Naive thymus-derived CD4-positive, alpha-beta T cell (primary cell): ENCODE measurements at regions of chr22 and their contacts with region 1.

Region 1: GRCh38 chr22:22802339-22802970 is 85.2 kb upstream of the IGLL5 start:
- DNase-seq: peak in 5 of 9 donors; percentile 26 to 53 (median 34)
- ATAC-seq: peak; percentile 79
- H3K4me3 ChIP-seq: no peak overlapping the region
- H3K4me3 Mint-ChIP-seq: no peak overlapping the region
- H3K27ac ChIP-seq: no peak overlapping the region
- H3K27ac Mint-ChIP-seq: peak overlapping the region in 1 of 9 donors; percentile 10
- H3K4me1 ChIP-seq: peaks cover 0 to 41% of the 10 kb centered on the region in 2 donors
- H3K4me1 Mint-ChIP-seq: peaks cover 0 to 29% (median 16%) of the 10 kb centered on the region in 7 donors
- H3K27me3 ChIP-seq: no peaks in the 10 kb centered on the region
- H3K27me3 Mint-ChIP-seq: peaks cover 0 to 51% (median 0%) of the 10 kb centered on the region in 5 donors

Region 2: DNA sequence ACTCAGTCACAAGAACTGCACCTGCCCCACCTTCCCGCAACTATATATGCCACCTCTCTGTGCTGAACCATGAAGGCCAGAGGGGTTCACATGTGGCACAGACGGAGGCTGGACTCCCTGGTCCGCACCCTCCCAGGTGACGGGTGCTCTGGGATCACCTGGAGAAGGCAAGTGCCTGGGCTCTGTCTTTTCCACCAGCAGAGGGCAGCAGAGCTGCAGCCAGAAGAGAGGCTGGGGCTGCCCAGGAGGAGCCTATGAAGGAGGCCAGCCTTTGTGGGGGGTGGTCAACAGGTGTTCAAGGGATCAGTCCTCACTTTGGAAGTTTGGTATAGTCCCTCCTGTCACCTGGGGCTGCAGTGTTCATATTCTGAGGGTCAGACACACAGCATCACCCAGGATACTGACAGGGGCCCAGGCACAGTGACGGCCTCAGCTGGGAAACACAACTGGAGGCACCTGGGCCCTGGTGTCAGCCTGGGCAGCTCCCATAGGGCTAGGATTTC is 46.0 kb after region 1 on chr22:
- CTCF ChIA-PET with region 1: interaction called, 7 read pairs
- POLR2A ChIA-PET with region 1: no interaction called
- intact Hi-C with region 1: loop called in 1 of 2 experiments (anchors 2 kb)
- DNase-seq: peak; percentile 35 to 75 (median 52)
- ATAC-seq: peak; percentile 83
- H3K4me3 ChIP-seq: no peak overlapping the region
- H3K4me3 Mint-ChIP-seq: no peak overlapping the region
- H3K27ac ChIP-seq: no peak overlapping the region
- H3K27ac Mint-ChIP-seq: peak overlapping the region in 3 of 9 donors; percentile 22 to 79 (median 52)
- H3K4me1 ChIP-seq: peaks cover 26 to 30% of the 10 kb centered on the region in 2 donors
- H3K4me1 Mint-ChIP-seq: peaks cover 8 to 57% (median 48%) of the 10 kb centered on the region in 7 donors
- H3K27me3 ChIP-seq: no peaks in the 10 kb centered on the region
- H3K27me3 Mint-ChIP-seq: peaks cover 0 to 59% (median 0%) of the 10 kb centered on the region in 5 donors

Region 3: DNA sequence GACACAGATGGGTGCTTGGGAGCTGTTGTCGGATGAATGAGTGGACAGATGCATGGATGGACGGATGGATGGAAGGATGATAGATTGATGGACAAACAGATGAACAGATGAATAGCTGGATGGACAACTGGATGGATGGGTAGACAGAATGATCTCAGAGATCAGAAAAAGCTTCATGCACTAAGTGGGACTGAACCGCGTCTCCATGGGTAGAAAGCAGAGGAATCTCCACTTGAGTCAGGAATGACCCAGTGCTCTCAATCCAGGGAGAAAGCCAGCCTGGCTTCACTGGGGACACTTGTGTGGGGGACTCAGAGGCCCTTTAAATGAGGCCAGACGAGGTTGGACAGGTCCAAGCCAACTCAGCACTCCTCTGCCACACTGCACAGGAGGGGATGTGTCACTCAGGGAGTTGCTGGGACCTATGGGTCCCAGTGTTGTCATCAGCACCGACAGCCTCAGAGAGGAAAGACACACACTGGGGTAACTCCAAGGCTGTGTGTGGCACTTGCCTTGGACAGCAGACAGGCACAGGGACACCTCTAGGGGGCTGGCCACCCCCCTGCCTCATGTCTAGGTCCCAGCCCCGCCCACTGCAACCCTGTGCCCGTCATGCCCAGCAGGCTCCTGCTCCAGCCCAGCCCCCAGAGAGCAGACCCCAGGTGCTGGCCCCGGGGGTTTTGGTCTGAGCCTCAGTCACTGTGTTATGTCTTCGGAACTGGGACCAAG is 90.8 kb after region 1 on chr22:
- CTCF ChIA-PET with region 1: no interaction called
- POLR2A ChIA-PET with region 1: no interaction called
- intact Hi-C with region 1: no loop called
- DNase-seq: no peak
- ATAC-seq: no peak
- H3K4me3 ChIP-seq: no peak overlapping the region
- H3K4me3 Mint-ChIP-seq: no peak overlapping the region
- H3K27ac ChIP-seq: no peak overlapping the region
- H3K27ac Mint-ChIP-seq: no peak overlapping the region
- H3K4me1 ChIP-seq: no peaks in the 10 kb centered on the region
- H3K4me1 Mint-ChIP-seq: peaks cover 0 to 3% (median 0%) of the 10 kb centered on the region in 7 donors
- H3K27me3 ChIP-seq: no peaks in the 10 kb centered on the region
- H3K27me3 Mint-ChIP-seq: peaks cover 4 to 49% (median 19%) of the 10 kb centered on the region in 5 donors